ENCODE measurements at regions of chr1 and their contacts with region 1.

Region 1: DNA sequence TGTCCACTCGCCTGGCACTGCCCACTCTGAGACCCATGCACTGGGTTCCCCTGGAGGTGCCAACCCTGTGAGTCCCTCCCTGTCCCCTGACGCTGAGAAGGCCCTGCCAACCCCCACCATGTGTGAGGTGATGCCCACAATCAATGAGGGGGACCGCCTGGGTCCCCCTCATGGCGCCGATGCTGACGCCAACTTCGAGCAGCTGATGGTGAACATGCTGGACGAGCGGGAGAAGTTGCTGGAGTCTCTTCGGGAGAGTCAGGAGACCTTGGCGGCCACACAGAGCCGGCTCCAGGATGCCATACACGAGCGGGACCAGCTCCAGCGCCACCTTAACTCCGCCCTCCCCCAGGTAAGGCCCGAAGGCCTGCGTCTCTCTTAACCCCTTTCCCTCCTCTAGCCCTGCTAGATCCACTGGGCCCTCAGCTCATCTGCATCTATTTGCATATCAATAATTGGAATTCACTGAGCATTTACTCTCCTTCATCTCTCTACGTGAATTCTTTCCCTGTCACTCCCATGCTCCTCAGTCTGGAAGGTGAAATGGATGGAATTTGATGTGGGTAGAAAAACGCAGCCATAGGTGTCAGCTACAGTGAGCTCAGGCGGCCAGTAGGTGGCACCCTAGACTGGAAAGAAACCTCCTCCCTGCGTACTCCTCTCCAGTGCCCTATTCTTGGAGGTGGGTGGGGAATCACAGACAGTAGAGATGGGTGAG is 12.8 kb downstream of the PPFIA4 start:
- DNase-seq: peak; percentile 29
- H3K4me3 ChIP-seq: no peak overlapping the region
- H3K27ac ChIP-seq: no peak overlapping the region
- H3K27me3 ChIP-seq: peaks cover 4% of the 10 kb centered on the region
- CTCF ChIP-seq: peak; percentile 94

Region 2: GRCh38 chr1:202968840-202969295 is 70.2 kb before region 1 on chr1:
- CTCF ChIA-PET with region 1: no interaction called
- POLR2A ChIA-PET with region 1: no interaction called
- DNase-seq: no peak
- H3K4me3 ChIP-seq: no peak overlapping the region
- H3K27ac ChIP-seq: no peak overlapping the region
- H3K27me3 ChIP-seq: no peaks in the 10 kb centered on the region
- CTCF ChIP-seq: peak; percentile 81

Region 3: DNA sequence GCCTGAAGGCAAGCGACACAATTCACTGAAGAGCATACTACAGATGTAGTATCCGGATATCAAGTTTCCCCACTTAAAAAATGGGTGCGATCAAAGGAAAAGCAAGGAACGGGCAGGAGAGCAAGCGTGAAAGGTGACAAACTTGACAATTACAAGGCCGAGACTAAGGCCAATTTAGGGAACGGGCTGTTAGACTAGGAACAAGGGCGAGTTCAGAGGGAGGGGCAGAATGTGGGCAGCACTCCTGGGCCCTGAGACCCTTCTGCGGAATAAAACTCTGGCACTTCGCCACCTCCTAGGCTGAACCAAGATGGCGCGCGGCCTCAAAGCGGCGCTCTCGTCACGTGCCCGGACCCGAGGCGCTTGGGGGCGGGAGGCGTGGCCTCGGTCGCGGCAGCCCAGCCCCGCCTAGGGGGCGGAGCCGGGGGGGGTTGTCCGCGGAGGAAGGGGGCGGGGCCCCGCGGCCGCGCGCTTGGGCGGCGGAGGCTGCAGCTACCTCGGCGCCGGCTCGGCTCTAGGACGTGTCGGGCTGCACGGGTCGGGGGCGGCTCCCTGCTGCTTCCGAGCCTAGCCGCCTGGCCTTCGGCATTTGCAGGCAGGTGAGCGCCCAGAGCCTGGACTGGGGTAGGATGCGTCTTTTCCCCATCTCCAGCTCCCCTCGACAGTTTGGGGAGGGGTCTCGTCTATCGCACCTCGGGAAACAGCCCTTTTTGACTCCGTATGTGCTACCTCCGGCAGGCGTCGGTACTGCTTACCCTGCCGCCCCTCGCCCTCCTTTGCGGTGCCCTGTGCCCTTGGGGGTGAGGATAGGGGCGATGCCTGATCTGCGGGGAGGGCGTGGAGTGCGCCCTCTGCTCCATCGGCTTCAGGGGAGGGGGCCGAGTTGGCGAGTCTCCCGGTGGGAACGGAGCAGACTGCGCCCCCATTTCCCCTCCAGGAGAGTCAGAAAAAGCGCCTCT is 12.7 kb before region 1 on chr1 and contains the start of gene PPFIA4:
- CTCF ChIA-PET with region 1: interaction called, 25 read pairs
- POLR2A ChIA-PET with region 1: no interaction called
- DNase-seq: peak; percentile 58
- H3K4me3 ChIP-seq: peak within 1 kb of the TSS; percentile 72
- H3K27ac ChIP-seq: no peak within 1 kb of the TSS
- H3K27me3 ChIP-seq: peaks cover 21% of the 10 kb centered on the region
- CTCF ChIP-seq: no peak
- polyA plus RNA-seq, gene PPFIA4: 0.82 and 1.5 TPM in 2 replicates

Region 4: DNA sequence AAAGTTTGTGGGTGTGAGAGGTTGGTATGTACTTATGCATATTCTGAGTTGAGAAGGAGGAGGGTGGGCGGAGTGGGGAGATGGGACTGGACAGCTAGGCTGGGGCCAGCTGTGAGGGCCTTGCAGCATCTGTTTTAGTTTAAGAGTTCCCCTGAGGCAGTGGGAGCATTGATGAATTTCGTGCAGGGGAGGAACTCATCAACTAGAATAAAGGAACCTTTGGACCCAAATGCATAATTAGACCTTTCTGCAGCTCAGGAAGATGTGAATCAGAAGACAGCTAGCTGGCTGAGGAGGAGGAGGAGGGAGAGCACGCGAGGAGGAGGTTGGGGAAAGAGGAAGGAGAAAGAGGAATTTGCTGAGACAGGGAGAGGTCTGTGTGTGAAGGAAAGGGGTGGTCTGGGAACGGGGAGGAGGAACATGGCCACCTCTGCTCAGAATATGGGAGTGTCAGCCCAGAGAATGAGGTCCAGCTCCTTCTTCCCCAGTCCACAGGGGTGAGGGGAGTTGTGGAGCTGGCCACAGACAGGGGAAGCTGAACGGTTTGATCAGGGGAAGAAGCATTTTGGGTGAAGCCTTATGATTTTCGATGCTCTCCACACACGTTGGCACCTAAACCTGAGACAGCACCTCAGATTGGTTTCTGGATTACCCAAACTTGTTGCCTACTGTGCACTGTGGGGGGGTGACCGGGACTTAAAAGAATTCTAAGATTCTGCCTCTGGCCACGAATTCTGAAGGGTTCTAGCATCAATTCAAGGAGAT is 19.0 kb after region 1 on chr1:
- CTCF ChIA-PET with region 1: interaction called, 39 read pairs
- POLR2A ChIA-PET with region 1: interaction called, 4 read pairs
- DNase-seq: no peak
- H3K4me3 ChIP-seq: no peak overlapping the region
- H3K27ac ChIP-seq: no peak overlapping the region
- H3K27me3 ChIP-seq: peaks cover 20% of the 10 kb centered on the region
- CTCF ChIP-seq: no peak

Region 5: GRCh38 chr1:203065191-203065590 is 26.1 kb after region 1 on chr1:
- CTCF ChIA-PET with region 1: interaction called, 10 read pairs
- POLR2A ChIA-PET with region 1: no interaction called
- DNase-seq: no peak
- H3K4me3 ChIP-seq: no peak overlapping the region
- H3K27ac ChIP-seq: no peak overlapping the region
- H3K27me3 ChIP-seq: peaks cover 13% of the 10 kb centered on the region
- CTCF ChIP-seq: no peak

Region 6: DNA sequence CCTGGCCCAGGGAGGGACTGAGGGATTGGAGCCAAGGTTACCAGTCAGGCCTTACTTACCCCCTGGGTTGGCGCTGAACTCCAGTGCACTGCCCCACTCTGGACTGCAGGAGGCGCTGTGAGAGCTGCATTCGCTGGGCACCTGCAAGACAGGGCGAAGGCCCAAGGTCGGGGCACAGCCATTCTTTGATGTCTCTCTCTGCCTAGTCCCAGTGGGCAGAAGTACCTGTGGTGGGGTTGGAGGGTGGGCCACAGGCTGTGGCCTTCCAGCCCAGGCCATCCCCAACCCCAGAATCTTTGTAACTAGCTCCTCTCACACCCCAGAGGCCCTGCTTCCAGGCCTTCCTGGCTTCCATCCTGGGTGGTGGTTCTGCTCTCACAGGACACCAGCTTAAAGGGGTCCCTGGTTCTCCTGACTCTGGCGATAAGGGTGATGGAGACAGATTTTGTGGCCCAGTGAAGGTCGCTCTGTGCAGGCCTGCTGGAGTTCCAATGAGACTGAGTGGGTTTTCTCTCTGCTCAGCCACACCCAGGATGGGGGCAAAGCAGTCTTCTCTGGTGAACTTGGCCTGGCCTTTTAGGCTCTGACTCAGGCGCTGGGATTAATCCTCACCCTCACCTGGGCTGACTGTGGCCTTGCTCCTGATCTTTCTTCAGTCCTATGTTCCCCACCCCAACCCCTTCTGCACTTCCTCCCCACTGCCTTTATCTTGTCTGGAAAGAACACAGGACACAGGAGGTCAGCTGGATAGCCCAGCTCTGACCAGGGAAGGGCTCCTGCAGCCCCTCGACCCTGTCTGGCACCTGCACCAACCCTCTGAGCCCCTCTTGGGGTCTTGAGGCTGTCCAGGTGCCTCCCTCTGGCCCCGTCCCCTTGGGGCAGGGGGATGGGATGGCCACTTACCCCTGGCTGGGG is 45.8 kb after region 1 on chr1:
- CTCF ChIA-PET with region 1: no interaction called
- POLR2A ChIA-PET with region 1: no interaction called
- DNase-seq: no peak
- H3K4me3 ChIP-seq: no peak overlapping the region
- H3K27ac ChIP-seq: no peak overlapping the region
- H3K27me3 ChIP-seq: peaks cover 58% of the 10 kb centered on the region
- CTCF ChIP-seq: peak; percentile 33

Region 7: DNA sequence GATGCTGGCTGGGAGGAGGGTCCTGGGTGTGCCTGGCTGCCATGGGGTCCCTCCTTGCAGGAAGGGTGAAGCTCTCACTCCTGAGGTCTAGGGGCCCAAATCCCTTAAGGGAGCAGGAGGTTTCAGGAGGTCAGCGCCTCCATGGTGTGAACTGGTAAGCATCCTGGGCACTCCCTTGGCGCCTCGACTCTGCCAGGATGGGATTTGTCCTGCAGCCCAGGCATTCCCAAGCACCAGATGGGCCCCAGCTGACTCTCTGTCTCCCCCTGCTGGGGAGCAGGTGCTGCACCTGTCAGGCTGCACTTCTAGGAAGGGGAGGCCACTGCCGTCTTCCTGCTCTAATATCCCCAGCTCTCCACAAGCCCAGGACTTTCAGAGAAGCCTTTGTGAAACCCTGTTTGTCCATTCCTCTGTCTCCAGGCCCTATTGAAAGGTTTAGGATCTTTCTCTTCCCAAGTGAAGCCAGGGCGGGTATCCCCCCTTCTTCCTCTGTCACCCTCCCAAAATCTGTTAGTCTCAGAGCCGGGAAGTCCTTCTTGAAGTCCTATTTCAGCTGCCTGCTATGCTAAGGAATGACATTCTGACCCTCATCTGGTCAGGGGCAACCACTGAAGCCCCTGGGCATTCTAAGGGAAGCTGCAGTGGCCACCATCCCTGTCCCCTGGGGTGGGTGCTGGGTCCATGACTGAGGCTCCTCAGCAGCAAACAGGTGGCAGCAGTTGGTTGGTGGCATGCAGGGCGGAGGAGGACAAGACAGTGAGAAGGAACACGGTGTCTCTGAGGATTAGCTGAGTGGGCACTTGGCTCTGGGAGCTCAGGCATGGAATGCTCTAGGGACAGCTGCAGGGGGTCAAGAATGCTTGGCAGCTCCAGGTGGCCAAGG is 133.3 kb after region 1 on chr1:
- CTCF ChIA-PET with region 1: interaction called, 26 read pairs
- POLR2A ChIA-PET with region 1: no interaction called
- DNase-seq: peak; percentile 21
- H3K4me3 ChIP-seq: no peak overlapping the region
- H3K27ac ChIP-seq: no peak overlapping the region
- H3K27me3 ChIP-seq: peaks cover 8% of the 10 kb centered on the region
- CTCF ChIP-seq: peak; percentile 81

Region 8: DNA sequence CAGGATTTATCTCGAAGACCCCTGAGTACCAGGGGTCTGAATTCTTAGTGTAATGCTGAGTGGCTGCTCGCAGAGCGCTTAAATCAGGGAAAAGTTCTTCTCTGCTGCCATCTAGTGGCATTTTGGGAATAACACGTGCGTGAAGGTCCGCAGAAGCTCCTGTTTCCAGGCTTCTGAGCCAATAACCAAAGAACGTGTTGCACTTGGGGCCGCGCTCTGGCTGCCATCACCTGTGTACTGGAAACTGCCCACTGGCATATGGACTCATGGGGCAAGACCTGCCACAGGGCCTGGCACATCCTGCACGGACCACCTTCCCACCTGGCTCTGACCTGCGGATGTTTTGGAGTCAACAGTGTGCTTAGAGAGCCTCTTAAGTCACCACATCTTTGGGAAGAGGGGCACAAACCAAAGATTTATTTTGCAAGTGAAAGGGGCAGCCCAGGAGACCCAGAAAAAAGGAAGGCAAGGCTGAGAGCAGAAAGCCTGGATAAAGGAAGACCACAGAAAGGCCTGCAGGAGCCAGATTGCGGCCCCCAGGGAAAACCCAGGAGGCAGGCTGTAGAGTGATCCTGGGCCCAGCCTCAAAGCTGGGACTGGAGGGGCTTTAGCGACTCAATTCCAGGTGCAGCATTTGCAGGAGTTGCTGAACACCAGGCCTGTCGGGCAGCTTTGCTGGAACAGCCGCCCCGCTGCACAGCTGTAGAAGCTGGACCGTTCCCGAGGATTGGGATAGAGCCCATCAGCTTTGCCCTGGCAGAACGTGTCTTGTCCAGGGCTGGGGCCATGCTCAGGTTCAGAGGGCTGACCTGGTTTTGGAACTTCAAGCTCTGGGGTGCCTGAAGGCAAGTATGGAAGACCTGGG is 177.5 kb after region 1 on chr1:
- CTCF ChIA-PET with region 1: interaction called, 117 read pairs
- POLR2A ChIA-PET with region 1: interaction called, 4 read pairs
- DNase-seq: peak; percentile 33
- H3K4me3 ChIP-seq: no peak overlapping the region
- H3K27ac ChIP-seq: no peak overlapping the region
- H3K27me3 ChIP-seq: peaks cover 42% of the 10 kb centered on the region
- CTCF ChIP-seq: peak; percentile 65

Region 9: DNA sequence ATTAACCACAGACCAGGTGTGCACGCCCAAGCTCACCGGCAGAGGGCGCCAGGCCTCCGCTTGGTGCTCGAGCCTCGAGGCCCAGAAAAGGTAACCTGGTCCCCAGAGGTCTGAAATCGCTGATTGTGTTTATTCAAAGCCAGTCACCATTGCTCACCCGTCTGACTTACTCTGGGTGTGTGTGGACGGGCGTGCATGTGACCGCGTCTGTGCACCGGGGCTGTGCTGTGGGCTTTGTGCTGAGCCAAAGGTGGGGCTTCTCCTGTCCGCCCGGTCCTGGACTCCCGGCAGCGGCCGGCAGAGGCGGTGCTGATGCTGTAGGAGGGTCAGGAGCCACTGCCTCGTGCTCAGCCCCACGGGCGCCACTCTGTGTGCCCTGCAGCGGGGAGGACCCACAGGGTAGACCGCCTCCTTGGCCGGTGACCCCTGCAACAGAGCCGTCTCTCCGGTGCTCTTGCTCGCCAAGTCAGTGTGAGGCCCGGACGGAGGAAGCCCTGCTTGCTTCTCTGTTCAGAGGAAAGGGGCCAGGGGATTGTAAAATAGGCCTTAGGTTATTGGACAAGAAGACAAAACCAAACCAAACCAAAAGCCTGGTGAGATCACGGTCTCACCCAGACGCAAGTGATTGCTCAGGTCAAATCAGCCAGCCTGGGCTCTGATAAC is 234.3 kb after region 1 on chr1:
- CTCF ChIA-PET with region 1: interaction called, 340 read pairs
- POLR2A ChIA-PET with region 1: no interaction called
- DNase-seq: no peak
- H3K4me3 ChIP-seq: 0 out of 2 replicates have a peak overlapping the region, but pooled peaks have one; percentile 20
- H3K27ac ChIP-seq: no peak overlapping the region
- H3K27me3 ChIP-seq: peaks cover 9% of the 10 kb centered on the region
- CTCF ChIP-seq: peak; percentile 98

Measured in AG04450 (cell line).